Breast epithelium (tissue), 4 donors: ENCODE measurements at regions of chr2 and their contacts with region 1.

Region 1: GRCh38 chr2:207619764-207620203 is 5.4 kb downstream of the METTL21A start:
- DNase-seq: no peak
- H3K4me3 ChIP-seq: no peak overlapping the region
- H3K27ac ChIP-seq: no peak overlapping the region
- H3K4me1 ChIP-seq: peaks cover 0 to 4% of the 10 kb centered on the region in 2 donors
- H3K27me3 ChIP-seq: no peaks in the 10 kb centered on the region
- CTCF ChIP-seq: no peak
- POLR2A ChIP-seq: no peak

Region 2: GRCh38 chr2:207334624-207335371 is 285.0 kb before region 1 on chr2:
- intact Hi-C with region 1: loop called (anchors 5 kb)
- DNase-seq: peak in 1 of 2 donors; percentile 72
- H3K4me3 ChIP-seq: peak overlapping the region; percentile 15 to 59 (median 39)
- H3K27ac ChIP-seq: peak overlapping the region; percentile 86 to 92
- H3K4me1 ChIP-seq: no peaks in the 10 kb centered on the region
- H3K27me3 ChIP-seq: no peaks in the 10 kb centered on the region
- CTCF ChIP-seq: no peak
- POLR2A ChIP-seq: no peak